ENCODE measurements at regions of chr6 and their contacts with region 1.

Region 1: DNA sequence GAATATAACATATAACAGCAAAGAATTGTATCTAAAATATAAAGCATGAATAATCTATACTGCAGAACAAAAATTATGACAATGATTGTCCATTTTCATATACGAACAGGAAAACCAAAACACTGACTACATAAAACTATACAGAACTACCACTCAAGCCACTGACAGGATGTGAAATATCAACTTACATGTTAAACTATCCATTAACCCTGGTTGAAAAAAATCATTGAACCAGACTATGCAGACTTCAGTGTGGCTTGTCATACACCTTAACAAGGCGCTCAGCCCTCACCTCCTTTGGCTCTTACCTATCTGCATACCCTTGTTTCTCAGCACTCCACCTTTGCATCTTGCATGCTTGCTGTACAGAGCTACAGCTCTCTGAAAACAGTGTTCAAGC is 34.9 kb downstream of the ASCC3 start:
- DNase-seq: no peak
- ATAC-seq: no peak
- H3K4me3 ChIP-seq: no peak overlapping the region
- H3K4me3 Mint-ChIP-seq: no peak overlapping the region
- H3K27ac ChIP-seq: no peak overlapping the region
- H3K27ac Mint-ChIP-seq: peak overlapping the region in 2 of 9 donors; percentile 3 to 43
- H3K4me1 ChIP-seq: peaks cover 0 to 5% of the 10 kb centered on the region in 2 donors
- H3K4me1 Mint-ChIP-seq: peaks cover 15 to 68% (median 42%) of the 10 kb centered on the region in 7 donors
- H3K27me3 ChIP-seq: no peaks in the 10 kb centered on the region
- H3K27me3 Mint-ChIP-seq: no peaks in the 10 kb centered on the region

Region 2: DNA sequence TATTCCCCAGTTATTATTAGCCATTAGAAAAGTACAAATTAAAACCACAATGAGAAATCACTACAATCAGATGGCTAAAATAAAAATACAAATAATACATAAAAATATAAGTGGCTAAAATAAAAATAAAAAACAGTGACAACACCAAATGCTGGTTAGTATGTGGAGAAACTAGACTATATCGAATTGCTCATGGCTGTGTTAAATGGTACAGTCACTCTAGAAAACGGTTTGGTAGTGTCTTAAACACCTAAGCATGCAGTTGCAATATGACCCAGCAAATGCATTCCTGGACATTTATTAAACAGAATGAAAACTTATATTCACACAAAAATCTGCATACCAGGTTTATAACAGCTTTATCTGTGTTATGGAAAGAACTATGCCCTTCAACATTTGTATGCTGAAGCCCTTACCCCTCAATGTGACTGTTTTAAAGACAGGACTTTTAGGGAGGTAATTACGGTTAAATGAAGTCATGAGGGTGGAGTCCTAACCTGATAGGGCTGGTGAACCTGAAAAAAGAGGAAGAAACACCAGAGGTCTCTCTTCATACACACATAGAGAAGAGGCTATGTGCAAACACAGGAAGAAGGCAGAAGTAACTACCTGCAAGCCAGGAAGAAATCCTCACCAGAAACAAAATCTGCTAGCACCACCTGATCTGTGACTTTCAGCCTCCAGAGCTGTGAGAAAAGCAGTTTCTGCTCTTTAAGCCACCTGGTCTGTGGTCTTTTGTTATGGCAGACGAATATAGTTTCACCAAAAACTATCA is 50.0 kb before region 1 on chr6:
- CTCF ChIA-PET with region 1: no interaction called
- POLR2A ChIA-PET with region 1: no interaction called
- intact Hi-C with region 1: no loop called
- DNase-seq: no peak
- ATAC-seq: peak; percentile 32
- H3K4me3 ChIP-seq: no peak overlapping the region
- H3K4me3 Mint-ChIP-seq: no peak overlapping the region
- H3K27ac ChIP-seq: no peak overlapping the region
- H3K27ac Mint-ChIP-seq: no peak overlapping the region
- H3K4me1 ChIP-seq: no peaks in the 10 kb centered on the region
- H3K4me1 Mint-ChIP-seq: peaks cover 0 to 8% (median 3%) of the 10 kb centered on the region in 7 donors
- H3K27me3 ChIP-seq: no peaks in the 10 kb centered on the region
- H3K27me3 Mint-ChIP-seq: no peaks in the 10 kb centered on the region

Region 3: GRCh38 chr6:100833972-100834574 is 12.2 kb before region 1 on chr6:
- CTCF ChIA-PET with region 1: no interaction called
- POLR2A ChIA-PET with region 1: no interaction called
- intact Hi-C with region 1: loop called in 1 of 2 experiments (anchors 2 kb)
- DNase-seq: no peak
- ATAC-seq: no peak
- H3K4me3 ChIP-seq: no peak overlapping the region
- H3K4me3 Mint-ChIP-seq: no peak overlapping the region
- H3K27ac ChIP-seq: no peak overlapping the region
- H3K27ac Mint-ChIP-seq: no peak overlapping the region
- H3K4me1 ChIP-seq: no peaks in the 10 kb centered on the region
- H3K4me1 Mint-ChIP-seq: peaks cover 10 to 30% (median 20%) of the 10 kb centered on the region in 7 donors
- H3K27me3 ChIP-seq: no peaks in the 10 kb centered on the region
- H3K27me3 Mint-ChIP-seq: no peaks in the 10 kb centered on the region

Measured in naive thymus-derived CD4-positive, alpha-beta T cell (primary cell).